WTC11 (cell line): ENCODE measurements at regions of chr11 and their contacts with region 1.

Region 1: GRCh38 chr11:64629796-64630562 is 39.0 kb downstream of the SLC22A12 start:
- DNase-seq: peak; percentile 99
- ATAC-seq: peak; percentile 98
- H3K4me3 Mint-ChIP-seq: peak overlapping the region; percentile 43
- H3K27ac Mint-ChIP-seq: no peak overlapping the region
- H3K4me1 Mint-ChIP-seq: peaks cover 16% of the 10 kb centered on the region
- H3K27me3 Mint-ChIP-seq: peaks cover 66% of the 10 kb centered on the region
- CTCF ChIP-seq: peak; percentile 54

Region 2: GRCh38 chr11:64341851-64342791 is 287.9 kb before region 1 on chr11:
- CTCF ChIA-PET with region 1: interaction called, 14 read pairs
- POLR2A ChIA-PET with region 1: no interaction called
- DNase-seq: peak; percentile 97
- ATAC-seq: peak; percentile 75
- H3K4me3 Mint-ChIP-seq: peak overlapping the region; percentile 69
- H3K27ac Mint-ChIP-seq: no peak overlapping the region
- H3K4me1 Mint-ChIP-seq: peaks cover 21% of the 10 kb centered on the region
- H3K27me3 Mint-ChIP-seq: peaks cover 30% of the 10 kb centered on the region
- CTCF ChIP-seq: no peak

Region 3: DNA sequence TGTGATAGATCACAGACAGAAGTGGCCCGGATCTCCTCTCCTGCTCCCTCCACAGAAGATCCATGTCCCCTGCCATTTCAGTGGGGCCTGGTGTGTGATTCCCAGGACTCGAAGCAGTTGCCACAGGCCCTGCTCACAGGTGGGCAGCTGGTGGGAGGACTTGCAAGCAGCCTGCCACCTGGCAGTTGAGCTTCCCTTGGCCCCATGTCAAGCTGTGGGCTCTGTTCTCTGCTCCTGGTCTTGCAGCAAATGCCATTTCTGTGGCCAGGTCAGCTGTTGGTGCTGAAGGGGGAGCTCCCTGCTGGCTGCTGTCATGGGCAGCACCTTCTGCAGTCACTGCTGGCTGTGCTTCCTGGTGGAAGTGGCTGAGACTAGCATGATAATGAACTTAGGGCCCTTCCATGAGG is 98.1 kb before region 1 on chr11:
- CTCF ChIA-PET with region 1: no interaction called
- POLR2A ChIA-PET with region 1: no interaction called
- DNase-seq: no peak
- ATAC-seq: no peak
- H3K4me3 Mint-ChIP-seq: no peak overlapping the region
- H3K27ac Mint-ChIP-seq: no peak overlapping the region
- H3K4me1 Mint-ChIP-seq: no peaks in the 10 kb centered on the region
- H3K27me3 Mint-ChIP-seq: peaks cover 43% of the 10 kb centered on the region
- CTCF ChIP-seq: no peak

Region 4: DNA sequence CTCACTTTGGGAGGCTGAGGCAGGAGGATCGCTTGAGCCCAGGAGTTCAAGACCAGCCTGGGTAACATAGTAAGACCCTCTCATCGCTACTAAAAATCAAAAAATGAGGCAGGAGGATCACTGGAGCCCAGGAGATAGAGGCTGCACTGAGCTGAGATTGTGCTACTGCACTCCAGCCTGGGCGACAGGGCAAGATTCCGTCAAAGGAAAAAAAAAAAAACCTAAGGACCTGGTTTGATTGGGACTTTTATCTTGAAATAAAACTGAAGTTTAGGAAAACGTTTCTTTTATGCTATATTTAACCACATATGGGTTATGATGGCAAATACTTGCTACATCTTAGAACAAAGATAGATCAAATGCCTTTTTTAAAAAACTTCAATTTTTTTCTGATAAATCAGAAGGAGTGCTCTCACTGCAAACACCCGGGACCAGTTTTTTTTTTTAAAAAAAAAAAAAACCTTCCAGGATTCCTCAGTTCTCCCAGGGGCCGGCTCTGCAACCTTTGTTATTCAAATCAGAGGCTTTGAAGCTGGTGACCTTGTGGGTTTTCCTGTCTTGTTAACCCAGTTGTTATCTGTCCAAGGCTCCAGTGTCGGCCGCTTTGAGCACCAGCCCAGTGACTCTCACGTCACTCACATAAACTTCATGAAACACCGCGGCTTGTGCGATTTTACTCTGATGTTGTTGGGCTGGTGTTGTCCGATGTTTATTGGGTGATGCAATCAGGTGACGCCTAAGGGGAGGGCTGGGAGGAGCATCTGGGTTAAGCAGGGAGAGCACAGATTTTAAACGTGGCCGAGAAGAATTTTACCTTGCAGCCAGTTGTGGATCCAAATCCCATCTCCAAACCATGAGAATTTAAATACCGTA is 63.7 kb before region 1 on chr11:
- CTCF ChIA-PET with region 1: interaction called, 26 read pairs
- POLR2A ChIA-PET with region 1: no interaction called
- DNase-seq: peak; percentile 59
- ATAC-seq: peak; percentile 45
- H3K4me3 Mint-ChIP-seq: peak overlapping the region; percentile 64
- H3K27ac Mint-ChIP-seq: peak overlapping the region; percentile 99
- H3K4me1 Mint-ChIP-seq: peaks cover 28% of the 10 kb centered on the region
- H3K27me3 Mint-ChIP-seq: no peaks in the 10 kb centered on the region
- CTCF ChIP-seq: no peak

Region 5: DNA sequence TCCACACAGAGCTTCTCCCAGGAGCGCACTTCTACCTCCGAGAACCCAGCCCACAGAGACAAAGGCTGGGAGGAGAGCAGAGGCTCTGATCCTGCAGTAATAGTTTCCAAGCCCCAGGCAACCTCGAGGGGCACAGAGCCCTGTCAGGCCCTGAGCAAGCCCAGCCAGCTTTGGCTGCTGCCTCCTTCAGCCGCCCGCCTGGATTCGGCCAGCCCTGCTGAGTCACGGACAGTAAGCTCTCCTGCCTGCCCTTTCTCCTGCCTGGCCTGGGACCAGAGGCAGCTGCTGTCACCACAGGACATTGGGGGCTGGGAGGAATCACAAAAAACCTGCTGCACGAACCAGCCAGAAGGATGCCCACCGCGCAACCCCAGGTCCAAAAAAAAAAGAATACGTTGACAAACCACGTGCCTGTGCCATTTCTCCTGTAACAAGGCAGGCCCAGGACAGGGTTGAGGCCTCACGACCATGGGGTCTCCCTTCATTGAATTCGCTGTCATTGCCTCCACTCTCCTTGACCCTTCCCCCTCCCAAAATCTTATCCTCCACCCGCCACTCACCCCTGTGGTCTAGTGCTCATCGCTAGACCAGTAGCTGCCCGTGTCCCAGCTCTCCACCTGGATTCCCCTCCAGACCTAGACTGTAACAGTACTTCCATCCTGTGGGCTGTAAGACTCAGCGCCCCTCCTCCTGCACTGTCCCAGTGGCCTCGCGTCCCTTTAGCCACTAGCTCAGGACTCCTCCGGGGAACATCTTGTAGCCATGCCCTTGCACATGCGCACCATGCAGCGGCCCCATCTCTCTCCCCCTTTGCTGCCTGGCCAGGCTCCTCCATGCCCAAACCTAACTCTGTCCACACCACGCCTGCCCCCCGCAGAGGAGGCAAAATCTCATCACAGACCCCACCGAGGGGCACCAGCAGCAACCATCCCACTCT is 46.4 kb before region 1 on chr11:
- CTCF ChIA-PET with region 1: interaction called, 11 read pairs
- POLR2A ChIA-PET with region 1: no interaction called
- DNase-seq: no peak
- ATAC-seq: no peak
- H3K4me3 Mint-ChIP-seq: no peak overlapping the region
- H3K27ac Mint-ChIP-seq: no peak overlapping the region
- H3K4me1 Mint-ChIP-seq: no peaks in the 10 kb centered on the region
- H3K27me3 Mint-ChIP-seq: peaks cover 11% of the 10 kb centered on the region
- CTCF ChIP-seq: no peak

Region 6: GRCh38 chr11:64619811-64620380 is 10.1 kb before region 1 on chr11:
- CTCF ChIA-PET with region 1: interaction called, 19 read pairs
- POLR2A ChIA-PET with region 1: no interaction called
- DNase-seq: peak; percentile 66
- ATAC-seq: peak; percentile 89
- H3K4me3 Mint-ChIP-seq: no peak overlapping the region
- H3K27ac Mint-ChIP-seq: no peak overlapping the region
- H3K4me1 Mint-ChIP-seq: peaks cover 11% of the 10 kb centered on the region
- H3K27me3 Mint-ChIP-seq: no peaks in the 10 kb centered on the region
- CTCF ChIP-seq: no peak

Region 7: GRCh38 chr11:64652586-64653387 is 22.8 kb after region 1 on chr11:
- CTCF ChIA-PET with region 1: interaction called, 194 read pairs
- POLR2A ChIA-PET with region 1: interaction called, 3 read pairs
- DNase-seq: peak; percentile 97
- ATAC-seq: peak; percentile 79
- H3K4me3 Mint-ChIP-seq: peak overlapping the region; percentile 20; the same call in 1 of the 2 replicates
- H3K27ac Mint-ChIP-seq: no peak overlapping the region
- H3K4me1 Mint-ChIP-seq: peaks cover 12% of the 10 kb centered on the region
- H3K27me3 Mint-ChIP-seq: peaks cover 14% of the 10 kb centered on the region
- CTCF ChIP-seq: peak; percentile 80

Region 8: GRCh38 chr11:64675450-64676260 is 45.7 kb after region 1 on chr11:
- CTCF ChIA-PET with region 1: interaction called, 13 read pairs
- POLR2A ChIA-PET with region 1: no interaction called
- DNase-seq: no peak
- ATAC-seq: no peak
- H3K4me3 Mint-ChIP-seq: no peak overlapping the region
- H3K27ac Mint-ChIP-seq: no peak overlapping the region
- H3K4me1 Mint-ChIP-seq: no peaks in the 10 kb centered on the region
- H3K27me3 Mint-ChIP-seq: peaks cover 65% of the 10 kb centered on the region
- CTCF ChIP-seq: no peak

Region 9: DNA sequence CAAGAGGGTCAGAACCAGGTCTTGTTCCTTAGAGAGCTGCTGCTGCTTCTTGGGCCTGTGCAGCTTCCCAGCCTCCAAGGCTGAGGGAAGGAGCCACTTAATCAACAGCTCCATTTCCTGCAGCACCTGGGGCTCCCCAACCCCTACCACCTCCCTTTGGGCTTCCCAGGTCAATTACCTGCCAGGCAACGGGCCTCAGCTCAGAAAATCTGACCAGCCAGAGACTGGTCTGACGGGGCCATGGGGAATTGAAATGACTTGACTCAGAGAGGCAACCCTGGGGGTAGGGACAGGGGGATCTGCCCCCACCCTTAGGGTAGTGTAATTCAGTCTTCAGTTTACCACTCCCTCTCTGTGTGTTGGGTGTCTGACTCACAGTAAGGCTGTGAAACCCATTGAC is 346.7 kb after region 1 on chr11:
- CTCF ChIA-PET with region 1: no interaction called
- POLR2A ChIA-PET with region 1: no interaction called
- DNase-seq: no peak
- ATAC-seq: no peak
- H3K4me3 Mint-ChIP-seq: no peak overlapping the region
- H3K27ac Mint-ChIP-seq: no peak overlapping the region
- H3K4me1 Mint-ChIP-seq: no peaks in the 10 kb centered on the region
- H3K27me3 Mint-ChIP-seq: peaks cover 32% of the 10 kb centered on the region
- CTCF ChIP-seq: no peak